ENCODE measurements at regions of chr5 and their contacts with region 1.

Region 1: DNA sequence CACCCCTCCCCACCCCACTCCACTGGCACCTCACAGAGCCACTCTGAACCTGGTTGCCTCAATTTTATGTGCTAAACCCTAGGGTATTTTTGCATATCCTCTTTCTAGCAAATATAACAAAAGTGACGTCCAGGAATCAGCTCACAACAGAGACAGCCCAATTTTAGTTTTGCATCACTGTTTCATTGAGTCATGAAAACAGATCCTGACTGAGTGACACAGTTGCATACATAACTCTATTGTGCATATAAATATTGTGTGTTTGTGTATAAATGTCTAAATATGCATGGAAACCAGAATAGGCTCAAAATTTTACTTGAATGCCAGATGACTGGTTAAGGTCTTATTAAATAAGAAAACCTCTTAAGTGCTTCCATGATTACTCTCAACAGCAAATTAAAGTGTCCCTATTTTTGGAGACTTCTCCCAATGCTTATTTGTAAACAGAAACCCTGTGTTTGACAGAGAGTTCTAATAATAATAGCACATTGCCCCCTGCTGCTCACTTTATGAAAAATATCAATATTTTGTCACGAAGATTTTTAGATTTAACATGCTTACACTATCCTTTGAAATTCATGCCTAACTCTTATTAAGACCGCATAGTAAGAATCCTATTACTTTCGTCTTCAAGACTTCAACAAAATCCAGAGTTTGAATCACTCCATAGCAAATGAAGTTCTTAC is 75.5 kb upstream of the PRRC1 start:
- DNase-seq: no peak
- H3K4me3 ChIP-seq: no peak overlapping the region
- H3K4me3 Mint-ChIP-seq: no peak overlapping the region
- H3K27ac Mint-ChIP-seq: no peak overlapping the region
- H3K4me1 ChIP-seq: no peaks in the 10 kb centered on the region; the same call in 1 of the 2 replicates
- H3K4me1 Mint-ChIP-seq: no peaks in the 10 kb centered on the region
- H3K27me3 ChIP-seq: no peaks in the 10 kb centered on the region
- H3K27me3 Mint-ChIP-seq: peaks cover 7% of the 10 kb centered on the region
- CTCF ChIP-seq: peak in 1 of 2 experiments; percentile 13

Region 2: GRCh38 chr5:127290019-127290945 is 151.7 kb before region 1 on chr5 and contains the start of gene MEGF10:
- CTCF ChIA-PET with region 1: no interaction called
- POLR2A ChIA-PET with region 1: no interaction called
- intact Hi-C with region 1: loop called (anchors 10 kb)
- DNase-seq: peak in 1 of 2 experiments; percentile 20
- H3K4me3 ChIP-seq: no peak within 1 kb of the TSS
- H3K4me3 Mint-ChIP-seq: peak within 1 kb of the TSS; percentile 18
- H3K27ac Mint-ChIP-seq: no peak within 1 kb of the TSS
- H3K4me1 ChIP-seq: no peaks in the 10 kb centered on the region
- H3K4me1 Mint-ChIP-seq: no peaks in the 10 kb centered on the region
- H3K27me3 ChIP-seq: peaks cover 2% of the 10 kb centered on the region
- H3K27me3 Mint-ChIP-seq: peaks cover 14% of the 10 kb centered on the region
- CTCF ChIP-seq: peak; percentile 20 to 37
- total RNA-seq, gene MEGF10: not detected in 2 replicates

Region 3: DNA sequence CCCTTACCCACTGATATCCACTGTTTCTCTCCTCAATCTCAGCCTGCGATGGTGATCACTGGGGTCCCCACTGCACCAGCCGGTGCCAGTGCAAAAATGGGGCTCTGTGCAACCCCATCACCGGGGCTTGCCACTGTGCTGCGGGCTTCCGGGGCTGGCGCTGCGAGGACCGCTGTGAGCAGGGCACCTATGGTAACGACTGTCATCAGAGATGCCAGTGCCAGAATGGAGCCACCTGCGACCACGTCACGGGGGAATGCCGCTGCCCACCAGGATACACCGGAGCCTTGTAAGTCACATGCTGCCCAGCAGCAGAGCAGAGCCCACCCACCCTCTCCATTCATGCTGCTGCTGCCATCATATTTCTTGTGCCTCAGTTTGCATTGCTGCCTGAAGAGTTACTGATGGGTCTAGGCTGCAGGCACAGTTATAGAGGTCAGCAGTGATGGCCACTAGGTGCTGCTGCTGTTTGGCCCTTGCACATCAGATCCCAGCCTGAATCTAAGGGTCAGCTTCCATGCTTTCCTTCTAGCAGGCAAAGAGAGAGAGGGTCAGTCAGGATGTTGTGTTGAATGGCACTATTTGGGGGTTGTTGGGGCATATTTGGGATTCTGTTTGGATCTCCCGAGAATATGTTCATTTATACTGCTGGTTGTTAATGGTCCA is 45.3 kb before region 1 on chr5:
- CTCF ChIA-PET with region 1: no interaction called
- POLR2A ChIA-PET with region 1: no interaction called
- intact Hi-C with region 1: loop called (anchors 2 kb)
- DNase-seq: no peak
- H3K4me3 ChIP-seq: no peak overlapping the region
- H3K4me3 Mint-ChIP-seq: no peak overlapping the region
- H3K27ac Mint-ChIP-seq: no peak overlapping the region
- H3K4me1 ChIP-seq: no peaks in the 10 kb centered on the region
- H3K4me1 Mint-ChIP-seq: no peaks in the 10 kb centered on the region
- H3K27me3 ChIP-seq: peaks cover 1% of the 10 kb centered on the region; the same call in 1 of the 2 replicates
- H3K27me3 Mint-ChIP-seq: peaks cover 31% of the 10 kb centered on the region
- CTCF ChIP-seq: peak in 1 of 2 experiments; percentile 45

Region 4: DNA sequence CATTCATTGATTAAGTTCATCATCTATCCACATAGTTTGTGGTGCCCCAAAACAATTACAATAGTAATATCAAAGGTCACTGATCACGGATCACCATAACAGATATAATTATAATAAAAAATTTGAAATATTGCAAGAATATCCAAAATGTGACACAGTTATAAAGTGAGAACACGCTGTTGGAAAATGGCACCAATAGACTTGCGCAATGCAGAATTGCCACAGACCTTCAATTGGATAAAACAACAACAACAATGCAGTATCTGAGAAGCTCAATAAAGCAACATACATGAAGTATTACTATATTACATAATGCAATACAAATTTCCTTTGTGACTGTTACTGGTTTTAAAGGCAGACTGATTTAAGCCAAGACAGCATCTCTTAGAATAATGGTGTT is 30.7 kb after region 1 on chr5:
- CTCF ChIA-PET with region 1: no interaction called
- POLR2A ChIA-PET with region 1: no interaction called
- intact Hi-C with region 1: no loop called
- DNase-seq: no peak
- H3K4me3 ChIP-seq: no peak overlapping the region
- H3K4me3 Mint-ChIP-seq: no peak overlapping the region
- H3K27ac Mint-ChIP-seq: no peak overlapping the region
- H3K4me1 ChIP-seq: no peaks in the 10 kb centered on the region
- H3K4me1 Mint-ChIP-seq: no peaks in the 10 kb centered on the region
- H3K27me3 ChIP-seq: no peaks in the 10 kb centered on the region; the same call in 1 of the 2 replicates
- H3K27me3 Mint-ChIP-seq: peaks cover 11% of the 10 kb centered on the region
- CTCF ChIP-seq: no peak

Measured in Caco-2 (cell line).